HEK293 (cell line): ENCODE measurements at regions of chr11 and their contacts with region 1.

Region 1: GRCh38 chr11:8006349-8006977 is 19.3 kb downstream of the EIF3F start:
- H3K4me3 ChIP-seq: no peak overlapping the region
- H3K27ac ChIP-seq: no peak overlapping the region
- H3K4me1 ChIP-seq: no peaks in the 10 kb centered on the region
- CTCF ChIP-seq: peak; percentile 68

Region 2: DNA sequence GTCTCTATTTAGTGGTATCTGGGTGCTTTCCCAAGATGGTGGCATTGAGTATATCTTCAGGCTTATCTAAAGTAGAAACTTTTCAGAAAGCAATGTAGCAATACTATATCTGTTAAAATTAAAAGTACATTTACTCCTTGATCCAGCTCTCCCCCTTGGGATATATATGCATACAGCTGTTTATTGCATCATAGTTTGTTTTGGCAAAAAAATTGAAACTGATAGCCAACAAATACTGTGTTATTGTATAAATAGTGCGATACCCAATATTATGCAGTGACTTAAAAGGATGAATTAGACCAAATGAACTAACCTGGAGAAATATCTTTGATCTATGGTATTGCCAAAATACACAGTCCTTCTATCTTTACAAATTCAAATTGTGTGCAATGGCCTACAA is 56.5 kb before region 1 on chr11:
- CTCF ChIA-PET with region 1: no interaction called
- POLR2A ChIA-PET with region 1: no interaction called
- H3K4me3 ChIP-seq: no peak overlapping the region
- H3K27ac ChIP-seq: no peak overlapping the region
- H3K4me1 ChIP-seq: no peaks in the 10 kb centered on the region
- CTCF ChIP-seq: no peak

Region 3: GRCh38 chr11:7969756-7970646 is 36.5 kb before region 1 on chr11:
- CTCF ChIA-PET with region 1: no interaction called
- POLR2A ChIA-PET with region 1: no interaction called
- H3K4me3 ChIP-seq: no peak overlapping the region
- H3K27ac ChIP-seq: no peak overlapping the region
- H3K4me1 ChIP-seq: no peaks in the 10 kb centered on the region
- CTCF ChIP-seq: no peak

Region 4: GRCh38 chr11:8018484-8019313 is 12.2 kb after region 1 on chr11:
- CTCF ChIA-PET with region 1: interaction called, 51 read pairs
- POLR2A ChIA-PET with region 1: no interaction called
- H3K4me3 ChIP-seq: peak overlapping the region; percentile 61
- H3K27ac ChIP-seq: peak overlapping the region; percentile 48; the same call in 1 of the 2 replicates
- H3K4me1 ChIP-seq: no peaks in the 10 kb centered on the region
- CTCF ChIP-seq: no peak

Region 5: DNA sequence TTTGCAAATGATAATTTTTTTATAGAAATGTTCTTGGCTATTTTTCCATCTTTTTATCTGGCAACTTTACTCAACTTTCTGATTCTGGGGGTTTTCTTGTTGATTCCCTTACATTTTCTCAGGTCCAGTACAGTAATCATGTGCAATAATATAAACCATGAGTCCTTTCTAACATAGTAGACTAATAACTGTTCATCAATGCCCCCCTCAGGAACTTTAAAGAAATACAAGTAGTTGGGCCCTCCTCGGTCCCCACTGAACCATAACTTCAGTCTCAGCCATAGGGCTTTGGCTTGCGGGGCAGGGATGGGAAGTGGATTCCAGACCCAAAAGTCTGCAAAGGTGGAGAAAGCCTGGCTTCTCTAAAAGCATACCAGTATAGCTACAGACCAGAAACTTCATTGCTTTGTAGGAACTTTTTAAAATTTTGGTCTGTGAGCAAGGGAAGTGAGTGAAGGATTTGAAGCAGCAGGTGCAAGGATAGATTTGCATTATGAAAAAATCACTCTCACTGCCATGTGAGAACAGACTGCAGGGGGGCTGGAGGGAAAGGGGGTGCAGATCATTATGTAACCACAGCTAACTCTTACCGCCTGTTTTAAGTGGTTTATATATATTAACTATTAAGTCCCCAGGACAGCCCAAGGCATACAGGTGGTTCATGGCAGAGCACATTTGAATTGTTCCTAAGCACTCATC is 64.1 kb after region 1 on chr11:
- CTCF ChIA-PET with region 1: interaction called, 12 read pairs
- POLR2A ChIA-PET with region 1: interaction called, 3 read pairs
- H3K4me3 ChIP-seq: no peak overlapping the region
- H3K27ac ChIP-seq: no peak overlapping the region
- H3K4me1 ChIP-seq: peaks cover 8% of the 10 kb centered on the region
- CTCF ChIP-seq: no peak

Region 6: GRCh38 chr11:8111636-8112035 is 105.2 kb after region 1 on chr11:
- CTCF ChIA-PET with region 1: interaction called, 28 read pairs
- POLR2A ChIA-PET with region 1: no interaction called
- H3K4me3 ChIP-seq: no peak overlapping the region
- H3K27ac ChIP-seq: no peak overlapping the region
- H3K4me1 ChIP-seq: no peaks in the 10 kb centered on the region
- CTCF ChIP-seq: no peak